ENCODE measurements at regions of chr10 and their contacts with region 1.

Region 1: DNA sequence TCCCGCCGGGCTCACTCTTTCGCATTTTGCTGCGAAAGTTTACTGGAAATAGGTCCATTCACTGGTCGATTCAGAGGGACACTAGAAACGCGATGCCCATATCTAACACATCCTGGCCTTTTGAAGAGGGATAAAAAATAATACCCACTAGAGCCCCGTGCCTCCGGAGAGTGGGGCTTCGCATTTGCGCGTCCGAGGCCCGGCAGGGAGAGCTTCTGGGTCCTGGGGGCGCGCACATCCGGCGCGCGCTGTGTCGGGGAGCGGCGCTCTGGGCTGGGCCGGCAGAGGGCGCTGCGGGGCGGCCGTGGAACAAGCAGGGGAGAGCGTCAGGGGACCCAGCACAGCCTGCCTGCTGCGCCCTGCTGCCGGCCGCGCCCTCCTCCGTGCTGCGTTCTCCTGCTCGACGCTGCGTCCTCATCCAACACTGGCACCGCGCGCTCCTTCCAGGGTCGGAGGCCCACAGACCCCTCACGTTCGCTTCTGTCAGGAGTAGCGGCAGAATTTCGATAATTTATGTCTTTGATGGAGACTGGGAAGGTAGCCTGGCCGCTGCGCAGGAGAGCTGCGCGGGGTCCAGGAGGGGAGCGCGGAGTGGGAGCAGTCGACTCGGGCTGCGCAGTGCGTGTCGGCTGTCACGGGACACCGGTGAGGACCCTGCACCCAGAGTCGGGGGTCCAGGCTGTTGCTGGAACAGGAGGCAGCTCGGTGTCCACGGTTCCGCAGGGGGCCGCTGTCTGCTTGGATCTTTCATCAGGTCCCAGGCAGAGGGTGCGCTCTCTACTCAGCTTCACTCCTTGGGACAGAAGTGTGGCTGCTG is 41.5 kb upstream of the ZNF32 start:
- DNase-seq: no peak
- H3K4me3 ChIP-seq: peak overlapping the region; percentile 56
- H3K27me3 ChIP-seq: no peaks in the 10 kb centered on the region
- CTCF ChIP-seq: peak; percentile 54

Region 2: DNA sequence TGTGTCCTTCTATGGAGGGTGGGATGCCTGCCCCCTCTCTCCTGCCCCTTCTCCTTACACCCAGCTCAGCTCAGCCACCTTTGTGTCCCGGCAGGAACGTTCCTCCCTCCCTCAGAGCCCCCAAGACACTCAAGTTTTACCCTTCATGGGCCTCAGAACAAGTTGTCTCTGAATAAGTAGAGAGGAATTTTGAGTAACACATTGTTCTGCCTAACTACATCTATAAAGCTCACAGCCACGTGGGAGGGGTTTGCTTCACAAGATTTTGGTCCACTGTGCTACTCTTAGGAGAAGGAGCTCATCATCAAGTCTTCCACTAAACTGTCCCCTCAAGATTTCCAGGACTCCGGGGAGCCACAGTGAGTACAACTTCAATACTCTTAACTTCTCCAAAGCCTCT is 10.1 kb after region 1 on chr10:
- CTCF ChIA-PET with region 1: interaction called, 10 read pairs
- POLR2A ChIA-PET with region 1: no interaction called
- DNase-seq: no peak
- H3K4me3 ChIP-seq: no peak overlapping the region
- H3K27me3 ChIP-seq: no peaks in the 10 kb centered on the region
- CTCF ChIP-seq: no peak

Region 3: GRCh38 chr10:43822631-43823580 is 132.7 kb after region 1 on chr10:
- CTCF ChIA-PET with region 1: interaction called, 10 read pairs
- POLR2A ChIA-PET with region 1: interaction called, 4 read pairs
- DNase-seq: peak; percentile 57
- H3K4me3 ChIP-seq: no peak overlapping the region
- H3K27me3 ChIP-seq: no peaks in the 10 kb centered on the region
- CTCF ChIP-seq: no peak

Region 4: DNA sequence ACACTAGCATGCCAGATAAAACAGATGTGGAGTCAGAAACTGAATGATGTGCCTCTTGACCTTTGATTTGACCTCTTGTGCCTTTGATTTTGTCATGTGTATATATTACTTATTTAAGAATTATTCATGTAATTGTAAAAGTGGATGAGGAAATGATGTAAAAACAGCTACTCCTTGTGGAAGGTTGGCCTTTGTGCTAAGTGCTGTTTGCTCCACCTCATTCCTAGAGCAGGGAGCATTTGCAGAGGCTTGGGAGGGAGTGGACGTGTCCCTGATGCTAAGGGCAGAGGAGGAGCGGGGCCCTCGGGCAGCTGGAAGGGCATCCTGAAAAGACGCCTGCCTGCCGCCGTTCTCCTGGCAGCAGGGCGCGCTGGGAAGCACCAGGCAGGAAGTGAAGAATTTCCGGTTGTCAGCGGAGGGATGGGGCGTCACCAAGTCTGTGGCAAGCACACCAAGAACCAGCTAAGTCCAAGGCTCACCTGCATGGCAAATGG is 156.1 kb after region 1 on chr10:
- CTCF ChIA-PET with region 1: interaction called, 20 read pairs
- POLR2A ChIA-PET with region 1: interaction called, 3 read pairs
- DNase-seq: peak; percentile 64
- H3K4me3 ChIP-seq: no peak overlapping the region
- H3K27me3 ChIP-seq: no peaks in the 10 kb centered on the region
- CTCF ChIP-seq: peak; percentile 22; the same call in 1 of the 2 replicates

Region 5: DNA sequence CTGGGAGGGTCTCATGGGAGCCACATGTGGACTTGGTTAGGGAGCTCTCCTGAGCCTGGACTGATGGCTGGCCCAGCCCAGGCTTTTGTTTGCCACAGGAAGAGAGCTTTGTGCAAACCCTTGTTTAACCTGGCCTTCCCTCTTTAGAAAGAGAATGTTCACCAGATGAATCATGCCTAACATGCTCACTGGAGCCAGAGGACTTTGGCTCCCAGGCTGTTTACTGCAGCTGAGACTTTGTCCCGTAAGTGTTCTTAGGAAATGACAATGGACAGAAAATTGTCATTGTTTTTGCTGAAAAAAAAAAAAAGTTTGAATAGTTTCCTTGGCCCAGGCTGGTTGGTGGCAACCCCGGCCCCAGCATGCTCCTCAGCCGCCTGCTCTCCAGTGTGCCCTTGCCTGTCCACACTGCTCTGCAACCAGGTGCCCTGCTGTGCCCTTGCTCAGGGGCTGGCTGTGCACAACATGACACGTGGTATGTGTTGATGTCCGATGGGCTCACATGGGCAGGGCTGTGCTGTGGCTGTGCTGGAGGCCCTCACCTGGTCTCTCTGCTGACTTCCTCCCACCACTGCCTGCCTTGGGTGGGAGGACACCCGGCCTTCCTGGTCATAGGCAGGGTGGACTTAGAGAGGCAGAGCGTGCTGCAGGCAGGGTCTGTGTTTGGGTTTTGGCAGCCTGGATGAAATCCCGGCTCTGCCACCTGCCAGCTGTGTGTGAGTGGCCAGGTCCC is 173.9 kb after region 1 on chr10:
- CTCF ChIA-PET with region 1: interaction called, 30 read pairs
- POLR2A ChIA-PET with region 1: no interaction called
- DNase-seq: peak; percentile 44
- H3K4me3 ChIP-seq: no peak overlapping the region
- H3K27me3 ChIP-seq: no peaks in the 10 kb centered on the region
- CTCF ChIP-seq: no peak

Region 6: DNA sequence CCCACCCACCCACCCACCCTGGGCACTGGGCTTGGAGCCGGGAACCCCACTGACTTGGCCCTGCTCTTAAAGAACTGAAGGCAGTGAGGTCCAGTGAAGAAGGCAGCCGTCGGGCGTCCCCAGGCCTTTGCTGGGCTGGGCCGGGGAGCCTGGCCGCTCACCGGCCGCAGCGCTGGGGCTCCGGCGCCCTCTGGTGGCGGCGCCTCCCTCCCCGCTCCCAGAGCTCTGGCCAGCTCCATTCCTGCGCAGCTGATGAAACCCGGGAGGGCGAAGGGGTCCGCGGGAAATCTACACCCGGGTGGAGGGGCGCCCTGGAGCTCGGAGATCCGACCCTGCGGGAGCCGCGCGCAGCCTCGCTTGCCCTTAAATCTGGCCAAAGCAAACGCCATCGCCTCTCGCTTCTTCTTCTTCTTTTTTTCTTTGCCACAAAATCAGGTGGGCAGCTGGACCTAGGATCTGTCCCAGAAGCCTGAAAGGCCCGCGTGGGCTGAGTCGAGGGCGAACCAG is 696.4 kb after region 1 on chr10:
- CTCF ChIA-PET with region 1: interaction called, 30 read pairs
- POLR2A ChIA-PET with region 1: no interaction called
- DNase-seq: no peak
- H3K4me3 ChIP-seq: no peak overlapping the region
- H3K27me3 ChIP-seq: no peaks in the 10 kb centered on the region
- CTCF ChIP-seq: peak; percentile 77